Left ventricle myocardium superior (tissue), 1 donor: ENCODE measurements at regions of chr1 and their contacts with region 1.

Region 1: DNA sequence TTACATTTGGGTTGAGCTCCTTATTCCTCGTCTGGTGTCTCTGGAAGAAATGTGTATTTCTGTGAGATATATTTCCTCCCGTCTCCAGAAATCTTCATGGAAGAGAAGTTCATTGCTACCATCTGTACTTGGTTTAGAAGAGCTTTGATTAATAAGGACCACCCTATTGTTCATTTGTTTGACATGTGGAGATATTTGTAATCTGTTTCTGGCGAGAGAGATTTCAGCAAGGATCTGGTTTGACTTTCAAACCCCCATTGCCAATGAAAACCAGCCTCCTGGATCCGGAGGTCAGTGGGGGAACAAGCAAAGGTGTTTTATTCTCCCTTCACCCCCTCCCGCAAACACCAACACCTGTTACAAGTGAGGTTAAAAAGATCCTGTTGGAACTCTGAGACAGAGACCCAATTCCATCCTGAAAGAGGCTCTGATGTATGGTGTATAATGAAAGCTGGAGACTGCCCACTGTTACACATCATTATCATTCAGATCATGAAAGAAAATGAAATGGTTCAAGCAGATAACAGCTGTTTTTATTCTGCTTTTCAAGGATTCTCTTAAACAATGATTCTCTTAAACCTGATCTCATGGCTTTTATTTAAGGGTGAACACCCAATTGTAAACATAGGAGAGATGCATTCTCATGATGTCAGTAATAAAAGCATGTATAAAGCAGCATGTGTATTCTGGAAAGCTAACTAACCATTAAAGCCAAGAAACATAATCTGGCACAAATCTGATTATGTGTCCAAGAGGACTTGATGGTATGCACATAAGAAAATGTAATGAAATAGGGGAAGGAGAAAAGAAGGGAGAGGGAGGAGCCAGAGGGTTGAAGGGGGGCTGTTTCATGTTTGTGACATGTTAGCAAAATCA is 393.5 kb upstream of the ADGRL2 start:
- DNase-seq: no peak
- ATAC-seq: no peak

Region 2: GRCh38 chr1:81118550-81118949 is 288.7 kb before region 1 on chr1:
- intact Hi-C with region 1: no loop called
- DNase-seq: no peak
- ATAC-seq: no peak

Region 3: DNA sequence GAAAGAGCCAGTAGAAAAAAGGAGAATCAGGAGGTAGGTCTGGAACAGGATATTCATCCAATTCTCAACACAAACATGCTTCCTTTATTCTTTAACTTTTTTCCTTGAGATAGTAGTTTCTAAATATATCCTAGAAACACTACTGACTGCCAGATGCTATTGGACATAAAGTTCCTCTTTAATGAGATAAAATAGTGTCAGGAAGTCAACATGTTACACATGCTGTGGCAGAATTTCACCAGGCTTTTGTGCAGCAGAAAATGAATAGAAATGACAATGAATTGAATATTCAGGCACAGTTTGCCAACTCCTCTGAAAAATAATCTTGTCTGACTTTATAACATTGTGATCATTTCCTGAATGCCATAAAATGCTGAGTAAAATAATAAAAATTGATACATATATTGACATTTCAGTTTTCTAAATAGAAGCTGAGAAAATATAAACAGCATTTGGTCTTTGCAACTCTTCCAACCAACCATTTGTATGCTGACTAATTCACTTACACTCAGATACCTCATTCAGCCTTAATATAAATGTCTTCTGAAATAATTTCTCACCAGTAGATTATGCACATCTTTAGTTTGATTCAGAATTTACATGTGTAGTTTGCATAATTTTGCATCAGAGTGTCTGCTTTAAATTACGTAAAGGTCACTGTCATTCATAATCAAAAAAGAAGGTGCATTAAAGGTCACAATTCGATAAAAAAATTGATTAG is 92.6 kb before region 1 on chr1:
- intact Hi-C with region 1: loop called (anchors 10 kb)
- DNase-seq: no peak
- ATAC-seq: peak; percentile 61